B cell (primary cell): ENCODE measurements at regions of chr22 and their contacts with region 1.

Region 1: GRCh38 chr22:46476547-46476941 is 60.9 kb downstream of the CELSR1 start:
- DNase-seq: peak; percentile 80
- ATAC-seq: peak; percentile 85
- H3K4me3 ChIP-seq: no peak overlapping the region
- H3K4me3 Mint-ChIP-seq: peak overlapping the region; percentile 10
- H3K27ac ChIP-seq: no peak overlapping the region
- H3K27ac Mint-ChIP-seq: peak overlapping the region; percentile 32
- H3K4me1 ChIP-seq: peaks cover 7 to 11% of the 10 kb centered on the region in 2 donors
- H3K4me1 Mint-ChIP-seq: peaks cover 14% of the 10 kb centered on the region
- H3K27me3 ChIP-seq: peaks cover 0 to 5% (median 0%) of the 10 kb centered on the region in 4 experiments
- H3K27me3 Mint-ChIP-seq: peaks cover 11% of the 10 kb centered on the region
- CTCF ChIP-seq: no peak

Region 2: DNA sequence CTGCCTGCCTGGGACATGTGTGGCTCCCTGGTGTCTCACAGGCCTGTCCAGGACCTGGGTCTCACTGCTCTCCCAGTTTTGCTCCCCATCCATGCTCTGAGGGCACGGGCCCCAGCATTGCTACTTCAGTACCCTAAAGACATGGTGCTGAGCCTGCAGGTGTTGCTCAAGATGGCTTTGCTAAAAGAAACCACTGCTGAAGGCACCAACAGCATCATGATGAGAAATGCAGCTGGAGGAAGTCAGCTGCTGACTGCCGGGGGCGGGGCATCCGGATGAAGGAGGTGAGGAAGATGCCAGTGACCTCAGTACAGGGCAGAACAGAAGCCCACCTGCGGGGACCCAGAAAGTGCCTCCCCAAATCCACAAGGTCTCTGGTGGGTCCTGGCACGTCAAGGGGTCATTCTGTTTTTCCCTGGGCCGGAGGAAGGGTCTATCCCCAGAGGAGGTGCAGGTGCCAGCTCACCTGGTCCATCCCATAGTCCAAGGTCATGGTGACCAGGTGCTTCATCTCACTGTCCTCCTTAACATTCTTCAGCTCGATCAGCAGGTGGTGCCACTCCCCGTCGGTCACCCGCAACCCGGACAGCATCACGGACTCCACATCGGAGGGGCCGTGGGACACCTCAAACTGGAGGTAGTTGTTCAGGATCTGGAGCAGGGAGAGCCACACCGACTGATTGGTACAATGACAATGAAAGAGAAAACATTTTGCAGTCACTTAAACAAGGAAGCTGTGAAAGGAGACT is 77.1 kb before region 1 on chr22:
- CTCF ChIA-PET with region 1: no interaction called
- POLR2A ChIA-PET with region 1: no interaction called
- intact Hi-C with region 1: no loop called
- DNase-seq: no peak
- ATAC-seq: no peak
- H3K4me3 ChIP-seq: no peak overlapping the region
- H3K4me3 Mint-ChIP-seq: no peak overlapping the region
- H3K27ac ChIP-seq: no peak overlapping the region
- H3K27ac Mint-ChIP-seq: no peak overlapping the region
- H3K4me1 ChIP-seq: no peaks in the 10 kb centered on the region
- H3K4me1 Mint-ChIP-seq: no peaks in the 10 kb centered on the region
- H3K27me3 ChIP-seq: no peaks in the 10 kb centered on the region
- H3K27me3 Mint-ChIP-seq: no peaks in the 10 kb centered on the region
- CTCF ChIP-seq: no peak

Region 3: DNA sequence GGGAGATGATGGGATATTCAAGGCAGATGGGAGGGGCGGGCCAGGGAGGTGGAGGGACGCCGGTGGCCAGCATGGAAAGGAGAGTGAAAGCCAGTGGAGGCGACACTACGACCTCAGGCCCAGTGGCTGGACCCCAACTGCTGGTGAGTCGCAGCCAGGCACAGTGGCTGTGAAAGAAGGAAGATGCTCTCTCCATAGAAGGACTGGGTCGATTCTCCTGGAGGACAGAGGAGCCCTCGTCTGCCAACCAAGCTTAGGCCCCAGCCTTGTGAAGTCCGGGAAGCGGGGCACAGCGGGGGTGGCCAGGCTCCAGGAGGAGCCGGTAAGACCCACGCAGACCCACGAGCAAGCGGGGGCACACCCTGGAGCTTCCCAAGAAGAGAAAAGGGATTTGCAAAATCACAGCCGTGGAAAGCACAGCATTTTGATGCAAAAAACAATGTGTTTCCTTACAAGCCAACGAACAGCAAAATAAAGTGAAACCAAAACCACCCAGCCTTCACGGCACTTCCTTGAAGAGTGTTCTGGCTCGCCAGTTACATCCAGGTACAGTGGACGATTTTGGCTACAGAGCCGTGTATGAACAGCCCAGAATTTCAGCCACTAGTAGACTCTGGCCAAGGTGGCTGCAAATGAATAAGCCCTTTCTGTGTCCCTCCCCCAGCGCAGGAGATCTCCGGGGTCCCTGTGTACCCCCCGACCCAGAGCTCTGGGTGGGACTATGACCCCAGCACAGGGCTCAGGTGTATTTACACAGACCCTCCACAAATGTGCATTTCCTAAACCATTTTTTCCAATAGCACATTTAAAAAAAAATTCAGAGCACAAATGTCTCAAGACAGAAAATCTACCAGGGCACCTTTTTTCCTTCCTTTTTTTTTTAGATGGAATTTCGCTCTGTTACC is 44.1 kb before region 1 on chr22:
- CTCF ChIA-PET with region 1: no interaction called
- POLR2A ChIA-PET with region 1: no interaction called
- intact Hi-C with region 1: loop called (anchors 5 kb)
- DNase-seq: peak; percentile 77
- ATAC-seq: peak; percentile 52
- H3K4me3 ChIP-seq: peak overlapping the region; percentile 60 to 99 (median 67)
- H3K4me3 Mint-ChIP-seq: peak overlapping the region; percentile 96
- H3K27ac ChIP-seq: peak overlapping the region; percentile 85 to 87
- H3K27ac Mint-ChIP-seq: peak overlapping the region; percentile 99
- H3K4me1 ChIP-seq: peaks cover 20 to 40% of the 10 kb centered on the region in 2 donors
- H3K4me1 Mint-ChIP-seq: peaks cover 38% of the 10 kb centered on the region
- H3K27me3 ChIP-seq: no peaks in the 10 kb centered on the region
- H3K27me3 Mint-ChIP-seq: no peaks in the 10 kb centered on the region
- CTCF ChIP-seq: no peak

Region 4: GRCh38 chr22:46992121-46992731 is 515.7 kb after region 1 on chr22:
- CTCF ChIA-PET with region 1: no interaction called
- POLR2A ChIA-PET with region 1: interaction called, 10 read pairs
- intact Hi-C with region 1: no loop called
- DNase-seq: no peak
- ATAC-seq: no peak
- H3K4me3 ChIP-seq: no peak overlapping the region
- H3K4me3 Mint-ChIP-seq: no peak overlapping the region
- H3K27ac ChIP-seq: no peak overlapping the region
- H3K27ac Mint-ChIP-seq: no peak overlapping the region
- H3K4me1 ChIP-seq: no peaks in the 10 kb centered on the region
- H3K4me1 Mint-ChIP-seq: peaks cover 3% of the 10 kb centered on the region
- H3K27me3 ChIP-seq: no peaks in the 10 kb centered on the region
- H3K27me3 Mint-ChIP-seq: no peaks in the 10 kb centered on the region
- CTCF ChIP-seq: no peak